Activated CD8-positive, alpha-beta T cell treated with anti-CD3 and anti-CD28 coated beads, Interleukin-2, amount 10 ng/mL, durations not matched to agents 7 days and 5 days (primary cell): ENCODE measurements at regions of chr4 and their contacts with region 1.

Region 1: GRCh38 chr4:108030332-108030731 is 40.6 kb downstream of the HADH start:
- DNase-seq: peak; percentile 85
- ATAC-seq: peak; percentile 87
- H3K4me3 Mint-ChIP-seq: peak overlapping the region; percentile 48
- H3K27ac Mint-ChIP-seq: peak overlapping the region; percentile 79
- H3K4me1 Mint-ChIP-seq: peaks cover 70% of the 10 kb centered on the region
- H3K27me3 Mint-ChIP-seq: no peaks in the 10 kb centered on the region

Region 2: DNA sequence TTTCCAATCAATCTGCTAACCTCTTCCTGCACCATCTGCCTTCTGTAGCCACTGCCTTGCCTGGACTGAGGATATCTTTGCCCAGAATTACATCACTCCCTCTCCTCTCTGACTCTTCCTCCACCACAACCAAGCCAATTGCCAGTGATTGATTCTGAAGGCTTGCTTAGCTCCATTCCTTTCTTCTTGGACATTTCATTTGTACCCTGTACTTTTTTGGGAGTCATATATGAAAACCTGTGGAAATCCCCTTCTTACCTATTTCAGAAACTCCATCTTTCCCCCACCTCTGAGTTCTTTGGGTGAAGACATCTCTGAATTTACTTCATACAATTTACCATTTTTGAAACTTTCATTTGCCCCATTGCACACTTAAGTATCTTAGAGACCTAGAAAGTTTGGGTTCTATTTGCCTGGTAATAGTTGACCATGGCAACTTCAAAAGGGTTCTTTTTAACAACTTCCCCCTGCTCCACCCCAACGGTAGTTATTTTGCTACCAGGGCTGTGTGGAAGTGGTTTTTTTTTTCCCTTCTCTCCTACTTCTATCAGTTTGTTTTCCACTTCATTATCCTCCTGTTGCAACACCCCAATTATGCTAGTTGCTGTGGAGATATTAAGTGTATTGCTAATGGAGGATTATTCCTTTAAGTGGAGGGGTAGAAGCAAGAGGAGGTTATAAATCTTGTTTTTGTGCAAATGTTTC is 191.3 kb before region 1 on chr4:
- CTCF ChIA-PET with region 1: no interaction called
- POLR2A ChIA-PET with region 1: no interaction called
- DNase-seq: no peak
- ATAC-seq: no peak
- H3K4me3 Mint-ChIP-seq: no peak overlapping the region
- H3K27ac Mint-ChIP-seq: no peak overlapping the region
- H3K4me1 Mint-ChIP-seq: no peaks in the 10 kb centered on the region
- H3K27me3 Mint-ChIP-seq: peaks cover 17% of the 10 kb centered on the region

Region 3: DNA sequence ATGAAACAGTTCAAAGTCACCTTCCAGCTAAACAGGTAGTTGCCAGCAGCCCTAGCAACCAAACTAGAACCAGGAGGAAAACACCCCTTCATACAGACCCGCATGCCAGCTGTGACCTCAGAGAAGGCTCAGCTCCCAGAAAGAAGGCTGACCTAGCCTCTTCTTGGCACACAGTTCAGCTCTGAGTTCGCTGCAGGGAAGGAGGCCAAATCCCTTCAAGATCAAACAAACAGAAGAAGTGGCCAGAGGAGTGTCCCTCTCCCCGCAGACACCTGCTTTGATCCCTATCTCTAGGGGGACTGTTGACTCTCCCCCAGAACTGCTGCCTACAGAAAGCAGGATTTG is 15.3 kb after region 1 on chr4:
- CTCF ChIA-PET with region 1: interaction called, 18 read pairs
- POLR2A ChIA-PET with region 1: interaction called, 5 read pairs
- DNase-seq: no peak
- ATAC-seq: no peak
- H3K4me3 Mint-ChIP-seq: no peak overlapping the region
- H3K27ac Mint-ChIP-seq: peak overlapping the region; percentile 47
- H3K4me1 Mint-ChIP-seq: peaks cover 59% of the 10 kb centered on the region
- H3K27me3 Mint-ChIP-seq: no peaks in the 10 kb centered on the region

Region 4: GRCh38 chr4:108060164-108060563 is 29.8 kb after region 1 on chr4:
- CTCF ChIA-PET with region 1: interaction called, 43 read pairs
- POLR2A ChIA-PET with region 1: interaction called, 3 read pairs
- DNase-seq: no peak
- ATAC-seq: no peak
- H3K4me3 Mint-ChIP-seq: no peak overlapping the region
- H3K27ac Mint-ChIP-seq: no peak overlapping the region
- H3K4me1 Mint-ChIP-seq: peaks cover 33% of the 10 kb centered on the region
- H3K27me3 Mint-ChIP-seq: no peaks in the 10 kb centered on the region

Region 5: GRCh38 chr4:108109997-108110416 is 79.7 kb after region 1 on chr4:
- CTCF ChIA-PET with region 1: interaction called, 23 read pairs
- POLR2A ChIA-PET with region 1: interaction called, 9 read pairs
- DNase-seq: no peak
- ATAC-seq: no peak
- H3K4me3 Mint-ChIP-seq: peak overlapping the region; percentile 63
- H3K27ac Mint-ChIP-seq: peak overlapping the region; percentile 87
- H3K4me1 Mint-ChIP-seq: peaks cover 93% of the 10 kb centered on the region
- H3K27me3 Mint-ChIP-seq: no peaks in the 10 kb centered on the region

Region 6: GRCh38 chr4:108155373-108155772 is 125.0 kb after region 1 on chr4:
- CTCF ChIA-PET with region 1: interaction called, 33 read pairs
- POLR2A ChIA-PET with region 1: no interaction called
- DNase-seq: peak; percentile 59
- ATAC-seq: peak; percentile 50
- H3K4me3 Mint-ChIP-seq: peak overlapping the region; percentile 53
- H3K27ac Mint-ChIP-seq: peak overlapping the region; percentile 31
- H3K4me1 Mint-ChIP-seq: peaks cover 83% of the 10 kb centered on the region
- H3K27me3 Mint-ChIP-seq: no peaks in the 10 kb centered on the region

Region 7: DNA sequence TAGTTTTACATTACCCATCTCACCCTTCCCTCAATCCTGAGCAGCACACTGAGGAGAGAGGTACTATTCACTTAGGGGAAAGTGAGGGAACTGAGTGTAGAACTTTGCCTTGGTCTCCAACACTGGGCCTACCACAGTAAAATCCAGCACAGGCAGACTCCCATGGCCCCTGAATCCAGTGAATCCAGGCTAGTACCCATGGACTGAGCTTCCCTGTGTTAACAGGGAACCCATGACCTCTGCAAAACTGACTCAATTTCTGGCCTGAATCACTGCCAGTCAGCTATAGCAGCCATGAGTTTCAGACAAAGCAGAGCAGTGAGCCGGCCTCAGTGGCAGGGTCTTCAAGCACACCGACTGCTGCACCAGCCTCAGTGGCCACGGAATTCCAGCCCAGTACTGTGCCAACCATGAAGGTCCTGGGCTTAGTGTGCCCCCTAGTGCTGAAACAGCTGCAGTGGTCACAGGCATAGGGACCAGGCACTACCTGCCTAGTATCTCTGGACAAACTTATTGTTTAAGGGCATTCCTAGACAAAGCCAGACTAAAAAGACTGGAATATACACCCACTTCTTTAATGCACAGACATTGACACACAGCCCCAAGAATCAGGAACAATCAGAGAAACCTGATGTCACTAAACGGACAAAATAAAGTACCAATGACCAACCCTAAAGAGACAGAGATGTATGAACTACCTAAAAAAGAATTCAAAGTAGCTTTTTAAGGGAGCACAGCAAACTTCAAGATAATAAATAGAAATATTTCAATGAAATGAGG is 462.7 kb after region 1 on chr4:
- CTCF ChIA-PET with region 1: interaction called, 12 read pairs
- POLR2A ChIA-PET with region 1: no interaction called
- DNase-seq: peak; percentile 39
- ATAC-seq: peak; percentile 53
- H3K4me3 Mint-ChIP-seq: no peak overlapping the region
- H3K27ac Mint-ChIP-seq: no peak overlapping the region
- H3K4me1 Mint-ChIP-seq: peaks cover 6% of the 10 kb centered on the region
- H3K27me3 Mint-ChIP-seq: no peaks in the 10 kb centered on the region